ENCODE measurements at regions of chr3 and their contacts with region 1.

Region 1: DNA sequence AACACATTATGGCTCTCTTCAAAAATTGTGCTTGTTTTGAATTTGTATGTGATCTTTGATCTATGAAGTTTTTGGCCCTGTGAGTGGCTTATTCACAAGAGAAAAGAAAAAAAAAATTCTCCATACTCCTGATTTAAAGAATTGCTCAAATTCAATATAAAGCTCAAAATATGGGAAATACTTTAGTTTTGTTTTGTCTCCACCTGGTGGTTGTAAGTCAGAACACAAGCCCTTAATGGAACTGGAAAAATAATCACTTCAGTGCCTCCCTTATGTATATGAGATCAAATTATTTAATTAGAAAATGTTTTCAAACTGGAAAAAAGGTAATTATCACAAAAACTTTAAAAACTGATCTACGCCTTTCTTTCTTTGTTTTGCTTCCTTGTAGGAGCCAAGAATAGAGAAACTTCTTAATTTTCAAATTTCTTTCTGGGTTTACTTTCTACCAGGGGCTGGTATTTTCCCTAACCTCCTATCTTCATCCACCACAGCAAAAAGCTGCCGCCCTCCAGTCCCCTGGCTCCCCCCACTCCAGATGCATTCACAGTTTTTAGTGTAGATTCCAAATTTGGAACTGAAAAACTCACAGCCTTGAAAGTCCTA is 50.6 kb downstream of the SERP1 start:
- DNase-seq: no peak
- H3K4me3 Mint-ChIP-seq: no peak overlapping the region
- H3K27ac Mint-ChIP-seq: no peak overlapping the region
- H3K4me1 Mint-ChIP-seq: no peaks in the 10 kb centered on the region
- H3K27me3 Mint-ChIP-seq: peaks cover 4% of the 10 kb centered on the region

Region 2: DNA sequence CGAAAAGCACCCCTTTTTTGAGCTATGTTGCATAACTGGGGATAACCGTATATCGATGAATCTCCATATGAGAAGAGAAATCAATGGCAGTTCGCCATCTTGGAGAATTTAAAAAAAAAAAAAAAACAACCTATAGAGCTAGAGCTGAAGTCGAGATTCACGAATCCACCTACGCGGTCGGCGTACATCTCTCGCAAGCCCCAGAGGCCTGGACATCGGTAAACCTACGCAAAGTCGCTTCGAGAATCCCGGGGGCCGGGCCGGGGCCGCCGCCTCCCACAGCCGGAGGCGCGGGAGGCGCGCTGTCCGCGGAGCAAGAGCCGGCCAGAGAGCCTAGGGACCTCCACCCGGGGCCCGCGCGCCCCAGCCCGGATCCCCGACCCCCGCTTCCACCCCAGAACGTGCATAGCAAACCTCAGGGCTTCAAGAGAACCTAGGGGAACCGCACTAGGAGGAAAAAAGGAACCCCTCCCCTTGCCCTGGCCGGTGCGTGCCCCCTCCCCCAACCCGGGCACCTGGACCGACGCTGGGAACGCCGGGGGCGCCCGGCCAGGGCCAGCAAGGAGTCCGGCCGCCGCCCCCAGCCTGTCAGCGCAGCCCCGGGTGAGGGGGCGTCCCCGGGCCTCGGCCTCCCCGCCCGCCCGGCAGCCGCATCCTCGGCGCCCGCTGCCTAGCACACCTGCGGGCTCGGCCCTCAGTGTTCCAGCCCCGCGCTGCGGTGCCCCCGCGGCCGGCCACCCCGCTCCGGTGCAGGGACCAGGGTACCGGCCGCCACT is 525.5 kb before region 1 on chr3:
- intact Hi-C with region 1: loop called (anchors 5 kb)
- DNase-seq: peak; percentile 63
- H3K4me3 Mint-ChIP-seq: peak overlapping the region; percentile 76
- H3K27ac Mint-ChIP-seq: no peak overlapping the region
- H3K4me1 Mint-ChIP-seq: peaks cover 12% of the 10 kb centered on the region
- H3K27me3 Mint-ChIP-seq: peaks cover 51% of the 10 kb centered on the region

Region 3: GRCh38 chr3:150227839-150228238 is 267.8 kb before region 1 on chr3:
- intact Hi-C with region 1: loop called (anchors 2 kb)
- DNase-seq: no peak
- H3K4me3 Mint-ChIP-seq: no peak overlapping the region
- H3K27ac Mint-ChIP-seq: no peak overlapping the region
- H3K4me1 Mint-ChIP-seq: no peaks in the 10 kb centered on the region
- H3K27me3 Mint-ChIP-seq: peaks cover 36% of the 10 kb centered on the region

Region 4: GRCh38 chr3:150286390-150287147 is 209.1 kb before region 1 on chr3:
- intact Hi-C with region 1: loop called (anchors 1 kb)
- DNase-seq: no peak
- H3K4me3 Mint-ChIP-seq: no peak overlapping the region
- H3K27ac Mint-ChIP-seq: no peak overlapping the region
- H3K4me1 Mint-ChIP-seq: no peaks in the 10 kb centered on the region
- H3K27me3 Mint-ChIP-seq: peaks cover 58% of the 10 kb centered on the region

Region 5: DNA sequence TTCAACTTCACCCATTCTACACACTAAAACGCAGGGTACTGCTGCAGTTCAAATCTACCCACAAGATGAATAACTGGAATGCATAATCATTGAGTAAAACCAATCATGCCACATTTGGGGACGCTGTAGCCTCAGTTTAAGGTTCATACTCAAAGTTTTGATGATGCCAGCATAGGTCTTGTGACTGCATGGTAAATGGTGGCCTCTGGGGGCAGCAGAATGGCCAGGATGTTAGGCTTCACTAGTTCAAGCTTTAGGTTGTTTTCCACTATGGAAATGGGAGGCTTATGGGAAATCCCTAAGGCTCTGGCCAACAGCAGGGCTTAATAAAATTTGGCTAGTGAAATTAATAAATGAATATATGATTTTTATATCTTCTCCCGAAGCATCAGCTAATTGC is 191.9 kb before region 1 on chr3:
- intact Hi-C with region 1: loop called (anchors 5 kb)
- DNase-seq: no peak
- H3K4me3 Mint-ChIP-seq: no peak overlapping the region
- H3K27ac Mint-ChIP-seq: no peak overlapping the region
- H3K4me1 Mint-ChIP-seq: no peaks in the 10 kb centered on the region
- H3K27me3 Mint-ChIP-seq: peaks cover 44% of the 10 kb centered on the region

Measured in activated T-helper 2 cell treated with anti-CD3 and anti-CD28 coated beads, Interferon-gamma antibody, Interleukin-2, Interleukin-4, amounts not matched to agents 10 μg/mL and 5 μg/mL and 100 μg/mL, durations not matched to agents 14 hours and 24 hours and 36 hours (primary cell).